ENCODE measurements at regions of chr15 and their contacts with region 1.

Region 1: GRCh38 chr15:90931737-90932659 is at the start of gene HDDC3:
- DNase-seq: peak; percentile 93
- H3K4me3 Mint-ChIP-seq: peak within 1 kb of the TSS; percentile 99
- H3K27ac Mint-ChIP-seq: peak within 1 kb of the TSS; percentile 100
- H3K4me1 Mint-ChIP-seq: peaks cover 47% of the 10 kb centered on the region
- H3K27me3 Mint-ChIP-seq: no peaks in the 10 kb centered on the region
- total RNA-seq, gene HDDC3: 45.0 to 45.8 TPM

Region 2: DNA sequence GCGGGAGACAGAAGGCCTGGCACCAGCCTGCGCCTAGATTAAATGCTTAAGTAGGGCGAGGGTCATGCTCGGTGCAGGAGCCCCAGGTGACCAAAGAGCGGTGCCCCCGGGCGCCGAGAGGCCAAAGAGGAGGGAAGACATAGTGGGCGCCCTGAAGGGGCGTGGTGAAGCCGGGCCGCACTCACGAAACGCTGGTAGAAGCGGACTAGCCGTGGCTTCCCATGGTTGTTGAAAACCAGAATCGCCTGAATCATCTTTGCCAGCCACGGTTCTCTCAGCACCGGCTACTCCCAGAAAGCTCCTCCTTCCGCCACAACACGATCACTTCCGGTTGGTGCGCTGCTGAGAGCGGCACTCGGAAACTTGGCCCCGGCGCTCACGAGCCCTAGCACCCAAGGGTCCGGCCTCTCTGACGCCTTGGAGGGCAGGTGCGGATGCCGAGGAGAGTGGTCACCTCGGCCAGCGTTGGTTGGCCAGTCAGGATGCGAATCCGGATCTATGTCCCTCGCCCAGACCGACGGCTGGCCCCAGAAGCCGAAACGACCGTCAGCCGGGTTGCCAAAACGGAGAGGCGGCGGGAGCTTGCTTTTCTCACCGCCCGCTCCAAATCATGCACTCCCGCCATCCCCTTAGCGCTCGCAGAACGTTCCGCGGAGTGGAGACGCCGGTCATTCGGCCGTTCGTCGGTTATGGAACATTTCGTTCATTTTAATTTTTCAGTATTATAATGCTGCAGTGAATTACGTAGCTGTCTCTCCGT is 1038.1 kb before region 1 on chr15 and contains the start of gene AP3S2:
- CTCF ChIA-PET with region 1: no interaction called
- POLR2A ChIA-PET with region 1: interaction called, 3 read pairs
- intact Hi-C with region 1: loop called (anchors 10 kb)
- DNase-seq: peak; percentile 95
- H3K4me3 Mint-ChIP-seq: peak within 1 kb of the TSS; percentile 95
- H3K27ac Mint-ChIP-seq: peak within 1 kb of the TSS; percentile 98
- H3K4me1 Mint-ChIP-seq: peaks cover 56% of the 10 kb centered on the region
- H3K27me3 Mint-ChIP-seq: no peaks in the 10 kb centered on the region
- total RNA-seq, gene AP3S2: 17.2 to 23.5 TPM

Region 3: GRCh38 chr15:90379263-90379662 is 552.7 kb before region 1 on chr15:
- CTCF ChIA-PET with region 1: no interaction called
- POLR2A ChIA-PET with region 1: no interaction called
- intact Hi-C with region 1: no loop called
- DNase-seq: no peak
- H3K4me3 Mint-ChIP-seq: no peak overlapping the region
- H3K27ac Mint-ChIP-seq: no peak overlapping the region
- H3K4me1 Mint-ChIP-seq: peaks cover 38% of the 10 kb centered on the region
- H3K27me3 Mint-ChIP-seq: no peaks in the 10 kb centered on the region

Region 4: GRCh38 chr15:90598031-90598577 is 333.9 kb before region 1 on chr15:
- CTCF ChIA-PET with region 1: interaction called, 3 read pairs
- POLR2A ChIA-PET with region 1: no interaction called
- intact Hi-C with region 1: loop called (anchors 2 kb)
- DNase-seq: peak; percentile 41
- H3K4me3 Mint-ChIP-seq: peak overlapping the region; percentile 31
- H3K27ac Mint-ChIP-seq: peak overlapping the region; percentile 100
- H3K4me1 Mint-ChIP-seq: peaks cover 75% of the 10 kb centered on the region
- H3K27me3 Mint-ChIP-seq: no peaks in the 10 kb centered on the region

Region 5: GRCh38 chr15:90818251-90819210 is 113.5 kb before region 1 on chr15:
- CTCF ChIA-PET with region 1: interaction called, 4 read pairs
- POLR2A ChIA-PET with region 1: no interaction called
- intact Hi-C with region 1: loop called (anchors 5 kb)
- DNase-seq: peak; percentile 62
- H3K4me3 Mint-ChIP-seq: peak overlapping the region; percentile 20
- H3K27ac Mint-ChIP-seq: peak overlapping the region; percentile 86
- H3K4me1 Mint-ChIP-seq: peaks cover 51% of the 10 kb centered on the region
- H3K27me3 Mint-ChIP-seq: no peaks in the 10 kb centered on the region

Region 6: DNA sequence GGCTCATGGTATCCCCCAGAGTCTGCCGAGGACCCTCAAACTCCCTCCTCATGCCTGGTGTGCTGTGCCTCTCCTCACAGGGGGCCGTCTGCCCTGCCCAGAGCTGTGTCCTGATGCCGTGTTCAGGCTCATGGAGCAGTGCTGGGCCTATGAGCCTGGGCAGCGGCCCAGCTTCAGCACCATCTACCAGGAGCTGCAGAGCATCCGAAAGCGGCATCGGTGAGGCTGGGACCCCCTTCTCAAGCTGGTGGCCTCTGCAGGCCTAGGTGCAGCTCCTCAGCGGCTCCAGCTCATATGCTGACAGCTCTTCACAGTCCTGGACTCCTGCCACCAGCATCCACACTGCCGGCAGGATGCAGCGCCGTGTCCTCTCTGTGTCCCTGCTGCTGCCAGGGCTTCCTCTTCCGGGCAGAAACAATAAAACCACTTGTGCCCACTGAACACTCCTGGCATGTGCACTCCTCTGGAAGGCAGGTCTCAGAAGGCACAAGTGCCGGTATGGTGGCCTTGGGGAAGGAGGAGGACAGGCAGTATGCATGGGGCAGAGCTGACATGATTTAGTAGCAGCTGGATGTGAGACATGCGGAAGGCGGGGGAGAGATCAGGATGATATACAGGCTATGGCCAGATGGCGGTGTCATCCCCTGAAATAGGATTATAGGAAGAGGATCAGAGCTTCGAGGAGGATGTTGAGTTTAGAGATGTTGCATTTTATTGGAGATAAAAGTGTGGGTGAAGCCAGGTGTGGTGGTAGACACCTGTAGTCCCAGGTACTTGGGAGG is 36.5 kb before region 1 on chr15:
- CTCF ChIA-PET with region 1: interaction called, 231 read pairs
- POLR2A ChIA-PET with region 1: no interaction called
- intact Hi-C with region 1: no loop called
- DNase-seq: no peak
- H3K4me3 Mint-ChIP-seq: no peak overlapping the region
- H3K27ac Mint-ChIP-seq: no peak overlapping the region
- H3K4me1 Mint-ChIP-seq: no peaks in the 10 kb centered on the region
- H3K27me3 Mint-ChIP-seq: no peaks in the 10 kb centered on the region

Region 7: GRCh38 chr15:90994417-90995311 is 62.7 kb after region 1 on chr15 and contains the start of gene PRC1:
- CTCF ChIA-PET with region 1: interaction called, 4 read pairs
- POLR2A ChIA-PET with region 1: interaction called, 3 read pairs
- intact Hi-C with region 1: loop called (anchors 1 kb)
- DNase-seq: peak; percentile 99
- H3K4me3 Mint-ChIP-seq: peak within 1 kb of the TSS; percentile 100
- H3K27ac Mint-ChIP-seq: peak within 1 kb of the TSS; percentile 98
- H3K4me1 Mint-ChIP-seq: peaks cover 25% of the 10 kb centered on the region
- H3K27me3 Mint-ChIP-seq: peaks cover 2% of the 10 kb centered on the region
- total RNA-seq, gene PRC1: 151 to 158 TPM

Region 8: GRCh38 chr15:91271565-91272153 is 339.7 kb after region 1 on chr15:
- CTCF ChIA-PET with region 1: interaction called, 27 read pairs
- POLR2A ChIA-PET with region 1: interaction called, 3 read pairs
- intact Hi-C with region 1: loop called (anchors 1 kb)
- DNase-seq: peak; percentile 72
- H3K4me3 Mint-ChIP-seq: peak overlapping the region; percentile 16
- H3K27ac Mint-ChIP-seq: no peak overlapping the region
- H3K4me1 Mint-ChIP-seq: peaks cover 8% of the 10 kb centered on the region
- H3K27me3 Mint-ChIP-seq: peaks cover 17% of the 10 kb centered on the region

Measured in activated CD4-positive, alpha-beta memory T cell treated with anti-CD3 and anti-CD28 coated beads for 36 hours (primary cell).